ENCODE measurements at regions of chr2 and their contacts with region 1.

Region 1: GRCh38 chr2:64144057-64145013 is at the start of gene PELI1:
- DNase-seq: peak; percentile 86 to 94 (median 90)
- H3K4me3 ChIP-seq: peak within 1 kb of the TSS; percentile 61 to 81
- H3K4me3 Mint-ChIP-seq: peak within 1 kb of the TSS; percentile 92 to 99 (median 98)
- H3K27ac ChIP-seq: peak within 1 kb of the TSS; percentile 88
- H3K27ac Mint-ChIP-seq: peak within 1 kb of the TSS; percentile 96 to 99 (median 98)
- H3K4me1 ChIP-seq: peaks cover 53% of the 10 kb centered on the region
- H3K4me1 Mint-ChIP-seq: peaks cover 22 to 39% (median 25%) of the 10 kb centered on the region in 4 donors
- H3K27me3 ChIP-seq: no peaks in the 10 kb centered on the region
- H3K27me3 Mint-ChIP-seq: no peaks in the 10 kb centered on the region
- total RNA-seq, gene PELI1: 36.7 to 40.5 TPM

Region 2: GRCh38 chr2:63977904-63978303 is 166.4 kb before region 1 on chr2:
- CTCF ChIA-PET with region 1: no interaction called
- POLR2A ChIA-PET with region 1: no interaction called
- intact Hi-C with region 1: no loop called
- DNase-seq: peak; percentile 9 to 22 (median 12)
- H3K4me3 ChIP-seq: no peak overlapping the region
- H3K4me3 Mint-ChIP-seq: peak overlapping the region in 4 of 8 donors; percentile 34 to 53 (median 48)
- H3K27ac ChIP-seq: no peak overlapping the region
- H3K27ac Mint-ChIP-seq: peak overlapping the region; percentile 14 to 66 (median 49)
- H3K4me1 ChIP-seq: peaks cover 18% of the 10 kb centered on the region
- H3K4me1 Mint-ChIP-seq: peaks cover 13 to 35% (median 15%) of the 10 kb centered on the region in 4 donors
- H3K27me3 ChIP-seq: no peaks in the 10 kb centered on the region
- H3K27me3 Mint-ChIP-seq: no peaks in the 10 kb centered on the region

Region 3: DNA sequence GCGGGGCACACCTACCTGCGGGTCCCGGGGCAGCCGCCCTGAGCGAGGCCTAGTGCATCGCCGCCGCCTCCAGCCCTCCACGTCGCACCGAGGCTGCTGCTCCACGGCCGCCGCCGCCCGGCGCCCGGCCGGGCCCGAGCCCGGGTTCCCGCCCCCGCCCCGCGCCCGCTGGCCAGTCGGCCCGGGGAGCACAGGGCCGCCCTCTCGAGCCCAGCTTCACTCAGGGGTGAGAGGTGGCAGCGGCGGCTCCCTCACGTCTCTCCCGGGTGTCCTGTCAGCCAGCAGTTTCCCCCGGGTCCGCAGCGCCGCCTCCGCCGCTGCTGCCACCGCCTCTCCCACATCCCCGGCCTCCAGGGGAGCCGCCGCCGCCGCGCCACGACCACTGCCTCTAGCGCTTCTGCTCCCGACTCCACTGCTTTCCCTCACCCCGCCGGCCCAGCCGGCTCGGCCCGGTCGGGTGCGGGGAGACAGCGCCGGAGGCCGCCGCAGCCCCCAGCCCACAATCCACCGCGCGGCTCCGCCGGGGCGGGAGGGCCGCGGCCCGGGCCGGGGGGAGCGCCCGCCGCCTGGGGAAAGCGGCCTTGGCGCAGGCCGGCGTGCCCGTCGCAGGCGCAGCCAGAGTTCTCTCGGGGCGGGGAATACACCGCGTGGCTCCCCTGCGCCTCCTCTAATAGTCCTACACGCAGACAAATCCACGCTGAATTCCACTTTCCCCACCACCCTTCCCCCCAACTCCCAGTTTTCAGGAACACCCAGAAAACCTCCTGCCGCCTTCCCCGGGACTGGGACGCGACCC is 125.2 kb before region 1 on chr2 and contains the start of gene VPS54:
- CTCF ChIA-PET with region 1: no interaction called
- POLR2A ChIA-PET with region 1: interaction called, 4 read pairs
- intact Hi-C with region 1: loop called (anchors 1 kb)
- DNase-seq: peak; percentile 59 to 74 (median 63)
- H3K4me3 ChIP-seq: peak within 1 kb of the TSS; percentile 51 to 58
- H3K4me3 Mint-ChIP-seq: peak within 1 kb of the TSS; percentile 98 to 99 (median 99)
- H3K27ac ChIP-seq: peak within 1 kb of the TSS; percentile 72
- H3K27ac Mint-ChIP-seq: peak within 1 kb of the TSS; percentile 94 to 99 (median 98)
- H3K4me1 ChIP-seq: peaks cover 55% of the 10 kb centered on the region
- H3K4me1 Mint-ChIP-seq: peaks cover 34 to 51% (median 42%) of the 10 kb centered on the region in 4 donors
- H3K27me3 ChIP-seq: no peaks in the 10 kb centered on the region
- H3K27me3 Mint-ChIP-seq: no peaks in the 10 kb centered on the region
- total RNA-seq, gene VPS54: 15.2 to 16.4 TPM

Region 4: GRCh38 chr2:64122358-64122757 is 22.0 kb before region 1 on chr2:
- CTCF ChIA-PET with region 1: no interaction called
- POLR2A ChIA-PET with region 1: interaction called, 4 read pairs
- intact Hi-C with region 1: loop called (anchors 2 kb)
- DNase-seq: peak in 1 of 5 donors; percentile 37
- H3K4me3 ChIP-seq: no peak overlapping the region
- H3K4me3 Mint-ChIP-seq: peak overlapping the region in 2 of 8 donors; percentile 4 to 27
- H3K27ac ChIP-seq: no peak overlapping the region
- H3K27ac Mint-ChIP-seq: peak overlapping the region in 2 of 7 donors; percentile 11 to 63
- H3K4me1 ChIP-seq: peaks cover 29% of the 10 kb centered on the region
- H3K4me1 Mint-ChIP-seq: peaks cover 30 to 64% (median 45%) of the 10 kb centered on the region in 4 donors
- H3K27me3 ChIP-seq: no peaks in the 10 kb centered on the region
- H3K27me3 Mint-ChIP-seq: no peaks in the 10 kb centered on the region

Region 5: GRCh38 chr2:64177315-64177714 is 33.0 kb after region 1 on chr2:
- CTCF ChIA-PET with region 1: no interaction called
- POLR2A ChIA-PET with region 1: no interaction called
- intact Hi-C with region 1: no loop called
- DNase-seq: no peak
- H3K4me3 ChIP-seq: no peak overlapping the region
- H3K4me3 Mint-ChIP-seq: no peak overlapping the region
- H3K27ac ChIP-seq: no peak overlapping the region
- H3K27ac Mint-ChIP-seq: no peak overlapping the region
- H3K4me1 ChIP-seq: no peaks in the 10 kb centered on the region
- H3K4me1 Mint-ChIP-seq: peaks cover 0 to 13% (median 10%) of the 10 kb centered on the region in 4 donors
- H3K27me3 ChIP-seq: no peaks in the 10 kb centered on the region
- H3K27me3 Mint-ChIP-seq: no peaks in the 10 kb centered on the region

Region 6: DNA sequence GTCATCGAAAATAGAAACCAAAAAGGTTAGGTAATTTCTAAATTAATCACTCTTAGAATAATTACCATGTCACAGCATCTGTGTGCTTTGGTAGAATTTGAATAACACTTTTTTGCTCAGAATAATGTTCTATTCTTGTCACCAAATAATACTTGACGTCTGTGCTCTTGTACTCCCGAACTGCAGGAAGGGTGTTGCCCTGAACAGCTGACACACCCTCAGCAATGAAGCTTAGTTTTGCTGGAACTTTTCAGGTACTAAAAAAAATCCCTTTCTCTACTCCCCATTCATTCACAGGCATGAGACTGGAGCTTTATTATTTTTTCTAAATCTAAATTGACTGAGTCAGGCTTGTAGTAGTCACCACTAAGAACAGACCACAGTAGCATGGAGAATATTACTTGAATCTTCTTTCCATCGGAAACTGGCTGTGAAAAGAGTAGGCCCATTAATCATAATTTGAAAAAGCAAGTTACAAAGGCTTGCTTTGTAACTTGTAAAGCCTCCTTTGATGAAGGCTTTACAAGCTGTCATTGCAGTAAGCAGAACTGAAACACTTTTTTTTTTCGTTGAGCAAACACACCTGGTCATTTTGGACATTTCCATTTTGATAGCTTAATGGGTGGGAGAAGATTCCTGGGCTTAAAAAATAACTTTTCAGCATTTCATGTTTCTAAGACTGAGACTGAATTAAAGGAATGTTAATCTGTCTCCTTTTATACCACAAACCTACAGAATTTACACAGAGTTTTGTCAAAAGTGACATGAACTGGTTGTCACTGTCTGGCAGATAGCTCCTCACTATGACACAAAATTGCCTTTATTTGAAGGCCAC is 70.2 kb after region 1 on chr2:
- CTCF ChIA-PET with region 1: no interaction called
- POLR2A ChIA-PET with region 1: interaction called, 18 read pairs
- intact Hi-C with region 1: loop called (anchors 1 kb)
- DNase-seq: peak; percentile 63 to 76 (median 73)
- H3K4me3 ChIP-seq: peak overlapping the region in 1 of 2 donors; percentile 28
- H3K4me3 Mint-ChIP-seq: peak overlapping the region; percentile 58 to 89 (median 76)
- H3K27ac ChIP-seq: peak overlapping the region; percentile 51
- H3K27ac Mint-ChIP-seq: peak overlapping the region; percentile 87 to 94 (median 92)
- H3K4me1 ChIP-seq: peaks cover 43% of the 10 kb centered on the region
- H3K4me1 Mint-ChIP-seq: peaks cover 29 to 46% (median 42%) of the 10 kb centered on the region in 4 donors
- H3K27me3 ChIP-seq: no peaks in the 10 kb centered on the region
- H3K27me3 Mint-ChIP-seq: no peaks in the 10 kb centered on the region

Region 7: GRCh38 chr2:64311948-64312621 is 167.8 kb after region 1 on chr2:
- CTCF ChIA-PET with region 1: no interaction called
- POLR2A ChIA-PET with region 1: no interaction called
- intact Hi-C with region 1: no loop called
- DNase-seq: no peak
- H3K4me3 ChIP-seq: no peak overlapping the region
- H3K4me3 Mint-ChIP-seq: no peak overlapping the region
- H3K27ac ChIP-seq: no peak overlapping the region
- H3K27ac Mint-ChIP-seq: no peak overlapping the region
- H3K4me1 ChIP-seq: no peaks in the 10 kb centered on the region
- H3K4me1 Mint-ChIP-seq: no peaks in the 10 kb centered on the region
- H3K27me3 ChIP-seq: no peaks in the 10 kb centered on the region
- H3K27me3 Mint-ChIP-seq: peaks cover 0 to 1% of the 10 kb centered on the region in 2 donors

Region 8: GRCh38 chr2:64488050-64488974 is 344.0 kb after region 1 on chr2:
- CTCF ChIA-PET with region 1: no interaction called
- POLR2A ChIA-PET with region 1: no interaction called
- intact Hi-C with region 1: loop called (anchors 10 kb)
- DNase-seq: peak; percentile 59 to 69 (median 65)
- H3K4me3 ChIP-seq: no peak overlapping the region
- H3K4me3 Mint-ChIP-seq: peak overlapping the region in 5 of 8 donors; percentile 1 to 31 (median 7)
- H3K27ac ChIP-seq: no peak overlapping the region
- H3K27ac Mint-ChIP-seq: peak overlapping the region in 1 of 7 donors; percentile 60
- H3K4me1 ChIP-seq: peaks cover 16% of the 10 kb centered on the region
- H3K4me1 Mint-ChIP-seq: peaks cover 7 to 20% (median 13%) of the 10 kb centered on the region in 4 donors
- H3K27me3 ChIP-seq: no peaks in the 10 kb centered on the region
- H3K27me3 Mint-ChIP-seq: peaks cover 0 to 2% of the 10 kb centered on the region in 2 donors